ENCODE measurements at regions of chr6 and their contacts with region 1.

Region 1: DNA sequence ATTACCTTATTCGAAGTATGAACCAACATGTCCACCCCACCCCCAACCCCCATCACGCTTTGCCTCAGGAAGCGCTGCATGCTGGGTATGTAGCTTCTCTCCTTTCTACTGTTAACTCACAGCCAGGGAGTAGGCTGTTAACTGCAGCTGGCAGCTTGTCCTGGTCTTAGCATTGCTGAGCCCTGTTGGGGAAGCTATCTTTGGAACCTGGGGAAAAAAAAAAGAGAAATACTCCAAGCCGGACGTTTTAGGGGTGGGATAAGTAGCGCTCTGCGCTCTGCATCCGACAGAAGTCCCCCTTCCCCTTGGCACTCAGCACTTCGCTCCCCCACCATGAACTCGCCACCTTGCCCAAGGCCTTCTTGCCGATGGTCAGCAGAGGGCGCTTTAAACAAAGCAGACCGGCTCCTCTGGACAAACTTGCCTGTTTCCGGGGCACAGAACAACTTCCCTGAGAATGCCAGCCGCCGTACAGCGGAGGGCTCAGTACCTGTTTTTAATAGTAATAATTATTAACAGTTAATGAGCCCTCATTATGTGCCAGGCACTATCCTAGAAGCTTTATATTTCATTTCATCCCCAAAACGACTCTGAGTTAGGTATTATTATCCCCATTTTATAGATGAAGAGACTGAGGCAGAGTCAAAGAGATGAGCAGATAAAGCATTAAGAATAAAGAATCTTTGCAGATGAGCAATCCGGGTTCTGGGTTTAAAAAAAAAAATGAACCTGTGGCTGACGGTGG is 35.2 kb upstream of the MDFI start:
- DNase-seq: peak in 5 of 6 donors; percentile 76 to 85 (median 82)
- ATAC-seq: peak; percentile 78 to 93 (median 88)
- H3K4me3 ChIP-seq: peak overlapping the region in 1 of 4 donors; percentile 9
- H3K27ac ChIP-seq: peak overlapping the region in 1 of 4 donors; percentile 14
- H3K4me1 ChIP-seq: no peaks in the 10 kb centered on the region
- H3K27me3 ChIP-seq: no peaks in the 10 kb centered on the region
- CTCF ChIP-seq: peak; percentile 70 to 87 (median 85)

Region 2: GRCh38 chr6:41675176-41675770 is 72.2 kb after region 1 on chr6:
- intact Hi-C with region 1: loop called in 2 of 3 experiments (anchors 5 to 10 kb)
- DNase-seq: peak in 1 of 6 donors; percentile 35
- ATAC-seq: peak in 2 of 4 donors; percentile 29 to 50
- H3K4me3 ChIP-seq: no peak overlapping the region
- H3K27ac ChIP-seq: no peak overlapping the region
- H3K4me1 ChIP-seq: no peaks in the 10 kb centered on the region
- H3K27me3 ChIP-seq: no peaks in the 10 kb centered on the region
- CTCF ChIP-seq: no peak

Region 3: DNA sequence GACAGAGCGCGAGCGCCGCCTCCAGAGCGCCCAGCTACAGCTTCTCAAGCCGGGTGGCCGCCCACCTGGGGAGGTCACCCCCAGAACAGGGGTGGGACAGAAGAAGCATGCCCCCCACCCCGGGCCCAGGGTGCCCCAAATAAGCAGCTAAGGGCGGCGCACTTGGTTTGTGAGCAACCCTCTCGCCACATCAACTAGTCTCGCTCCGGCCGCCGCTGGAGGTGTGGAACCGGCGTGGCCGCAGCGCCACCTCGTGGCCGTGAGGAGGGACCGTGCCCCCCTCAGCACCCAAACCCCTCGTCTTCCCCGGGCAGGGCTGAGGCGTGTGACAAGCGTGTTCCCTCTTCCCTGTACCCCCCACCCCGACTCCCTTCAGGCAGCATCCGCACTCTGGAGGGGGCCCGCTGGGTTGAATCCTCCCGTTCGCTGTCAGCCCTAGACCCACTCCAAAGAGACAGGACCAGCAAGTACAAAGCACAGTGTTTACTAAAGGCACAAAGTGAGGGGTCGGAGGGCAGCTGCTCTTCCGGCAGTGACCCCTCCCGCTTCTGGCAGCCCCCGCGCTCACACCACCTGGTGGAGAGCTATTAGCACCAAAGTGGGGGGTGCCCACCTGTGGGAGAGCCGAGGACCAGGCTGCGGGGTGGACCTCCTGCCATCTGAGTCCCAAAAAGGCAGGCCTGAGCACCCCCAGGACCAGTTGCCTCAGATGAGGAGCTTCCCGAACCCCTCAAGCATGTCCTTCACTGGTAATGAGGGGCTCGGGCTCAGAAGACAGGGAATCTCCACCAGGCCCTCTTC is 80.7 kb after region 1 on chr6:
- intact Hi-C with region 1: loop called in 2 of 3 experiments (anchors 5 to 10 kb)
- DNase-seq: peak; percentile 49 to 88 (median 71)
- ATAC-seq: peak; percentile 58 to 84 (median 67)
- H3K4me3 ChIP-seq: peak overlapping the region in 1 of 4 donors; percentile 36
- H3K27ac ChIP-seq: peak overlapping the region in 1 of 4 donors; percentile 70
- H3K4me1 ChIP-seq: peaks cover 0 to 9% (median 6%) of the 10 kb centered on the region in 3 donors
- H3K27me3 ChIP-seq: no peaks in the 10 kb centered on the region
- CTCF ChIP-seq: peak; percentile 66 to 75 (median 72)

Region 4: DNA sequence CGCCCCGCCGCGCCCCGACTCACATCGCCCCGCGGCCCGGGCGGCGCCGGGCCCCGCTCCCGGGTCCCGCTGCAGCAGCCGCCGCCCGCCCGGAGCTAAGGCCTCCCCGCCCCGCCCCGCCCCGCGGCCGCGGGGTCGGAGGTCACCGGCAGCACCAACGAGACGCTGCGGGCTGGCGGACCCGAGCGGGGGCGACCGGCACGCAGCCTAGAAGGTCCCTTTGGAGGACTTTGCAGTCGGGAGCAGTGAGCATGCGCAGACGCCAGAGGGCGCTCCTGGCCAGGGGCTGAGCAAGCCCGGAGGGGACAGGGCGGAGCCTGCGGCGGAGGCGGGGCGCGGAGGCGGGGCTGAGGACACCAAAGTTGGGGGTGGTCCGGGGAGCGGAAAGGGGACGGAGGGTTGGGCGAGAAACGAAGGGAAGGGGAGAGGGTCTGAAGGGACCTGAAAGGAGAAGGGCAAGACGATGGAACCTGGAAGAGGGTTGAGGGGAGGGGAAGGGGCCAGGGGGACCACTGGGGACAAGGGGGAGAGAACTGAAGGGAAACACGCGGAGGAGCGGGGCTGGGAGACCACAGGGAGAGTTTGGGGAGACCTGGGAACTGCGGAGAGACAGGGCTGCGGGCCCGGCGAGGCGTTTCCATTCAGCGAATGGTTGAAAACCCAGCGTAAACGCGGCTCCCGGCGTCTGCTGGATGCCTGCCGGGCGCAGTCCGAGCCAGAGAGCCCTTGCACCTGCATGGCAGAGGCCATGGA is 176.9 kb after region 1 on chr6 and contains the start of gene FRS3:
- intact Hi-C with region 1: loop called in 1 of 3 experiments (anchors 10 kb)
- DNase-seq: peak; percentile 98 to 100 (median 100)
- ATAC-seq: peak; percentile 90 to 97 (median 92)
- H3K4me3 ChIP-seq: peak within 1 kb of the TSS; percentile 51 to 79 (median 64)
- H3K27ac ChIP-seq: peak within 1 kb of the TSS; percentile 50 to 91 (median 72)
- H3K4me1 ChIP-seq: peaks cover 5 to 14% (median 6%) of the 10 kb centered on the region in 3 donors
- H3K27me3 ChIP-seq: no peaks in the 10 kb centered on the region
- CTCF ChIP-seq: peak; percentile 70 to 91 (median 88)
- total RNA-seq, gene FRS3: 2.1 to 5.2 (median 2.7) TPM

Region 5: DNA sequence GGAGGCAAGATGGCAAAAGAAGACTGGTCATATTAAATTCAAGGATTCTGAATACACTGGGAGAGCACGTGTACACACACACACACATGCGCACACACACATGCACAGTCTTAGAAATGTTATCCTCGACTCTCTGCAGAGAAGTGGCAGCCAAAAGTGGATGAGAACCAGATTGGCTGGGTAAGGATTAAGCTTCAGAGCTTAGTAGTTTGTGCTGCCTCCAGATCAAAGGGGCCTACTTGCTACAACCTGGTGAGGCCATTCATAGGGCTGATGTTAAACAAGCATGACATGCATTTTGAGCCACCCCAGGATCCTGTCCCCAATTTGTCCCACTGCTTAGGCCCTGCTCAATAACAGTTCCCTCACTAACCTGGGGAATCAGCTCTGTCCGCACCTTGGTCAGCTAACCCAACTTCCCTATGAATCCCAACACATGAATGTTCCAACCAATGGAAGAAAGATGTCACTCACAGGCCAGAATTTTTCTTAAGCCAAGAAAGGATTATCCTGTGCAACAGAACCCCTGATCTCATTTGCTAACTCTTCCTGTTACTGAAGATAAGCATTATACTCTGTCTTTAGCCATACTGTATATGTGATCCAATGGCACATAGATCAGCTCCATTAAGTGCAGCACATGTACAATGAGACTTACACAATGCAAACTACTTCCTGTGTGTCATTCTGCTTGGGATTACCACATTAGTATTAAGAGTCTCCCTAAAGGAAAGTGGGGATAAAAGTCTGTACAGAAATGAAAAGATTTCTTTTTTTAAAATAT is 215.4 kb after region 1 on chr6:
- intact Hi-C with region 1: no loop called
- DNase-seq: no peak
- ATAC-seq: no peak
- H3K4me3 ChIP-seq: no peak overlapping the region
- H3K27ac ChIP-seq: no peak overlapping the region
- H3K4me1 ChIP-seq: no peaks in the 10 kb centered on the region
- H3K27me3 ChIP-seq: no peaks in the 10 kb centered on the region
- CTCF ChIP-seq: no peak